ENCODE measurements at regions of chr2 and their contacts with region 1.

Region 1: DNA sequence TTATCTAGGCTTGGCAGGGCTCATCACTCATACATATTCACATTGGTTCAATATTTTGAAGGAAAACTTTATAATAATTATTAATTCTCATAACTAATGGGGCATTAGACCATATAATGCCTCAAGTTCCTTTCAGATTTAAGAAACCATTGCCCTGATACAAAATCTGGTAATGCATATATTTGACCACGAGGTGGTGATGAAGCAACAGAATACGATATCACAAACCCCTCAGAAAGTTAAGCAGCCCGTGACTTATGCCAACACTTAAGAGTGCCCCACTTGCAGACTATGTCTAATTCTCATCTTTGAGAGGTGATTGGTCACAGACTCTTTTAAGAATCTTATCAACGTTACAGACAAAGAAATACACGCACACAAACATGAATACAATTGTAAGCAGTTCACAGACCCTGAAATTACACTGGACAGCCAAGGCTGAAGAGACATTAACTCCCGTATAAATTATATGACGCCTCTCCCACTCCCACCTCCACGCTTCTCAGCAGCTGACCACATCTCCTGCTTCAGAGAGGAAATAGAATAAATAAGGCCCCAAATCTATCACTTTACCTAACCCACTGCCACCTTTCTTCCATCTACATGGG is 20.7 kb upstream of the DNAH6 start:
- DNase-seq: peak; percentile 18 to 61 (median 33)
- ATAC-seq: peak; percentile 86
- H3K4me3 ChIP-seq: no peak overlapping the region
- H3K27ac ChIP-seq: no peak overlapping the region
- H3K4me1 ChIP-seq: no peaks in the 10 kb centered on the region
- H3K27me3 ChIP-seq: 0 out of 5 replicates have a peak, but pooled peaks cover 0 to 3% of the 10 kb centered on the region in 2 experiments
- CTCF ChIP-seq: peak; percentile 52 to 70 (median 57)
- EP300 ChIP-seq: no peak
- POLR2A ChIP-seq: no peak
- RAD21 ChIP-seq: peak; percentile 80 to 87

Region 2: DNA sequence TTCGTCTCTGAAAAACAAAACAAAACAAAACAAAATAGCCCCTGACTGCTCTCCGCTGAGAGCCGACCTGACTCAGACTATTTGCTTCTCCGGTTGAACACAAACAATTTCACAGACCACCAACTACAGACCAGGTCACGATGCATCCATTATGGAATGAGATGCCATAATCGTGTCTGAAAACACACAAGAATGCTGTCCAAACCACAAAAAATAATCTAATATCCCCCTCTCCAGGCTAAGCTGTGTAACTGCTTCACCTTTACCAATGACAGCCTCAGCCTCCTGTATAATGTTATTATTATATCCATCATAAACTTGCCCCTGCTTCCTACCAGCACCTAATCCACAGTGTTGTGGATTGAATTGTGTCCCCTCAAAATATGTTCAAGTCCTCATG is 135.4 kb after region 1 on chr2:
- CTCF ChIA-PET with region 1: interaction called, 3 read pairs
- POLR2A ChIA-PET with region 1: no interaction called
- in situ Hi-C with region 1: no loop called
- intact Hi-C with region 1: loop called (anchors 1 kb)
- DNase-seq: peak; percentile 14 to 42 (median 24)
- ATAC-seq: peak; percentile 83
- H3K4me3 ChIP-seq: no peak overlapping the region
- H3K27ac ChIP-seq: no peak overlapping the region
- H3K4me1 ChIP-seq: no peaks in the 10 kb centered on the region
- H3K27me3 ChIP-seq: no peaks in the 10 kb centered on the region
- CTCF ChIP-seq: peak; percentile 40 to 76 (median 66); a peak in 5 of 6 replicates
- EP300 ChIP-seq: no peak
- POLR2A ChIP-seq: no peak
- RAD21 ChIP-seq: peak; percentile 60 to 76

Region 3: GRCh38 chr2:84865181-84865783 is 369.6 kb after region 1 on chr2:
- CTCF ChIA-PET with region 1: interaction called, 3 read pairs
- POLR2A ChIA-PET with region 1: no interaction called
- in situ Hi-C with region 1: loop called (anchors 5 kb)
- intact Hi-C with region 1: loop called (anchors 1 kb)
- DNase-seq: no peak
- ATAC-seq: peak; percentile 72
- H3K4me3 ChIP-seq: no peak overlapping the region
- H3K27ac ChIP-seq: no peak overlapping the region
- H3K4me1 ChIP-seq: no peaks in the 10 kb centered on the region
- H3K27me3 ChIP-seq: peaks cover 14 to 36% of the 10 kb centered on the region in 2 experiments
- CTCF ChIP-seq: peak; percentile 29 to 64 (median 54); a peak in 5 of 6 replicates
- EP300 ChIP-seq: no peak
- POLR2A ChIP-seq: no peak
- RAD21 ChIP-seq: peak; percentile 68 to 76

Region 4: GRCh38 chr2:84881581-84882414 is 386.2 kb after region 1 on chr2:
- CTCF ChIA-PET with region 1: interaction called, 10 read pairs
- POLR2A ChIA-PET with region 1: no interaction called
- in situ Hi-C with region 1: no loop called
- intact Hi-C with region 1: loop called (anchors 5 kb)
- DNase-seq: peak; percentile 63 to 82 (median 66)
- ATAC-seq: peak; percentile 94
- H3K4me3 ChIP-seq: peak overlapping the region; percentile 10; the same call in 1 of the 2 replicates
- H3K27ac ChIP-seq: no peak overlapping the region
- H3K4me1 ChIP-seq: peaks cover 0 to 13% of the 10 kb centered on the region in 2 experiments; a peak in 4 of 5 replicates
- H3K27me3 ChIP-seq: peaks cover 35 to 36% of the 10 kb centered on the region in 2 experiments
- CTCF ChIP-seq: peak; percentile 71 to 82 (median 80)
- EP300 ChIP-seq: no peak
- POLR2A ChIP-seq: no peak
- RAD21 ChIP-seq: peak; percentile 72 to 78